Heart right ventricle (tissue), 16 donors: ENCODE measurements at regions of chr5 and their contacts with region 1.

Region 1: GRCh38 chr5:60677844-60678664 is 21.9 kb downstream of the DEPDC1B start:
- DNase-seq: no peak
- ATAC-seq: no peak
- H3K4me3 ChIP-seq: no peak overlapping the region
- H3K27ac ChIP-seq: no peak overlapping the region
- H3K4me1 ChIP-seq: peaks cover 0 to 2% (median 0%) of the 10 kb centered on the region in 9 donors
- H3K27me3 ChIP-seq: peaks cover 0 to 6% (median 0%) of the 10 kb centered on the region in 7 donors
- CTCF ChIP-seq: peak; percentile 26 to 64 (median 52)

Region 2: DNA sequence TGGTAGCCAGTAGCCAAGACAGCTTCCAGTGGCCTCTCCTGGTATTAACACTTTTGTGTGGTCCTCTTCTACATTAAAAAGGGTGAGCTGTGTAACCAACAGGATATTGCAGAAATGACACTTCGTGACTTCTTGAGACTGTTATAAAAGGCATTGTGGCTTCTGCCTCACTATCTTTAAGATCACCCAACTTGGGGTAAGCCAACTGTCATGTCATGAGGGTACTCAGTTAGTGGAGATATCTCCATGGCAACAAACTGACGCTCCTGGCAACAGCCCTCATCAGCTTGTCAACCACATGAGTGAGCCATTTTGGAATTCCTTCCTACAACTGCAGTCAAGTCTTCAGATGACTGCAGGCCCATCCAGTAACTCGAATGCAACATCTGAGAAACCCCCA is 99.7 kb before region 1 on chr5:
- intact Hi-C with region 1: no loop called
- DNase-seq: no peak
- ATAC-seq: no peak
- H3K4me3 ChIP-seq: no peak overlapping the region
- H3K27ac ChIP-seq: no peak overlapping the region
- H3K4me1 ChIP-seq: no peaks in the 10 kb centered on the region
- H3K27me3 ChIP-seq: no peaks in the 10 kb centered on the region
- CTCF ChIP-seq: no peak

Region 3: DNA sequence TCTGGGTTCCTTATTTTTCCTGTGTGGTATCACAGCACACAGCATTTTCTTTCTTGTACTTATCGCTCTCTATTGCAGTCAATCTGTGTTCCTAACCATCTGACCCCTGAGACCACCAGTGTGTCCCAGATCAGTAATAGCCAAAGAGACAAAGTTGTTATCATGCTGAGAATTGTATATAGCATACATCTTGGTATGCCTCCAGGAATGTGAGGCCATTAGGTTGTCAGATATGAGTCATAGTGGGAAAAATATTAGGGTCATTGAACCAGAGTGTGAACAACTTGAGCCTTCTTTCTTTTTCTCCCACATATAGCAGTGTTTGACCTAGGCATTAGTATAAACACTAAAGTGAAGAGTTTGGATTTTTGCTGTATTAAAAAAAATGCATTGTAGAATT is 373.2 kb after region 1 on chr5:
- intact Hi-C with region 1: no loop called
- DNase-seq: no peak
- ATAC-seq: no peak
- H3K4me3 ChIP-seq: no peak overlapping the region
- H3K27ac ChIP-seq: no peak overlapping the region
- H3K4me1 ChIP-seq: no peaks in the 10 kb centered on the region
- H3K27me3 ChIP-seq: no peaks in the 10 kb centered on the region
- CTCF ChIP-seq: no peak

Region 4: DNA sequence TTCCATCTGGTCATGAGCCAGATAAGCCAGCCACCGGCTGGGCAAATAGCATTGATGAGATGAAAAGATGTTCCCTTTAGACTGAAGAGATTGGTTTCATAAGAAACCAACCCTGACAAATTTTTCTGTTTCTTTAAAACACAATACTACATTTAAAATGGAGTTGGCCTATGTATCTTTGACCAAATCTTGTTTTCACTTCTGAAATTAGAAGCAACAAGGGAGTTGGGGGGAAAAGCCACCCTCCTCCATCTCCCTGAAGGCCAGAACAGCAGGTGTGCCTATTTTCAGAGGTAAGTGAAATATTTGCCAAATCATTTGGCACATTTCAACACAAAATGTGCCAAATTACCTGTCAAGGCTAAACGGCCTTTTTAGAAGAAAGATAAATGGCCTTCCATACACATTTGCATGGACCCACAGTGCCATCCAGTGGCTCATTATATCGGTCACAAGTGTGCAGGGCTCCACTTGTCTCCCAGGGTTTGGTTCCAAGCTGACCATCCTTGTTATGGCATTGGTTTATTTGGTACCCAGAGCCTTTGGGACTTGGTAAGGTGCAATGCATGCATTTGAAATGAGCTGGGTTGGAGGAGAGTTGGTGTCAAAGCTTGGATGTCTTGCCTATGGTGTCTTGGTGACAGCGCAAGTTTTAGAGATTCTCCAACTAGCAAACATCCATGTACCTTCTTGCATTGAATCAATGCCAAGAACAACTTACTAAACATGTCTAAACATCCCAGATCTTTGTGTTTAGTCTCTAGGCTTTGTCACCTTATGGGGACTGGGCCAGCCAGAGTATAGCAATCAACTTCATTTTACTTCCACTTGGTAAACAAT is 1256.0 kb after region 1 on chr5:
- intact Hi-C with region 1: loop called in 5 of 10 experiments (anchors 5 to 10 kb)
- DNase-seq: peak in 1 of 2 donors; percentile 8
- ATAC-seq: peak in 3 of 8 donors; percentile 51 to 67 (median 64)
- H3K4me3 ChIP-seq: no peak overlapping the region
- H3K27ac ChIP-seq: no peak overlapping the region
- H3K4me1 ChIP-seq: no peaks in the 10 kb centered on the region
- H3K27me3 ChIP-seq: no peaks in the 10 kb centered on the region
- CTCF ChIP-seq: peak; percentile 36 to 74 (median 65)

Region 5: GRCh38 chr5:62143268-62144229 is 1465.5 kb after region 1 on chr5:
- intact Hi-C with region 1: loop called in 1 of 10 experiments (anchors 10 kb)
- DNase-seq: no peak
- ATAC-seq: no peak
- H3K4me3 ChIP-seq: no peak overlapping the region
- H3K27ac ChIP-seq: no peak overlapping the region
- H3K4me1 ChIP-seq: no peaks in the 10 kb centered on the region
- H3K27me3 ChIP-seq: peaks cover 0 to 80% (median 27%) of the 10 kb centered on the region in 7 donors
- CTCF ChIP-seq: peak in 6 of 9 donors; percentile 46 to 60 (median 51)